AG04450 (cell line): ENCODE measurements at regions of chr14 and their contacts with region 1.

Region 1: GRCh38 chr14:55270832-55271565 is at the start of gene FBXO34:
- DNase-seq: peak; percentile 90
- H3K4me3 ChIP-seq: peak within 1 kb of the TSS; percentile 95
- H3K27ac ChIP-seq: peak within 1 kb of the TSS; percentile 71
- H3K27me3 ChIP-seq: no peaks in the 10 kb centered on the region
- CTCF ChIP-seq: peak; percentile 99
- polyA plus RNA-seq, gene FBXO34: 26.8 and 30.9 TPM in 2 replicates

Region 2: DNA sequence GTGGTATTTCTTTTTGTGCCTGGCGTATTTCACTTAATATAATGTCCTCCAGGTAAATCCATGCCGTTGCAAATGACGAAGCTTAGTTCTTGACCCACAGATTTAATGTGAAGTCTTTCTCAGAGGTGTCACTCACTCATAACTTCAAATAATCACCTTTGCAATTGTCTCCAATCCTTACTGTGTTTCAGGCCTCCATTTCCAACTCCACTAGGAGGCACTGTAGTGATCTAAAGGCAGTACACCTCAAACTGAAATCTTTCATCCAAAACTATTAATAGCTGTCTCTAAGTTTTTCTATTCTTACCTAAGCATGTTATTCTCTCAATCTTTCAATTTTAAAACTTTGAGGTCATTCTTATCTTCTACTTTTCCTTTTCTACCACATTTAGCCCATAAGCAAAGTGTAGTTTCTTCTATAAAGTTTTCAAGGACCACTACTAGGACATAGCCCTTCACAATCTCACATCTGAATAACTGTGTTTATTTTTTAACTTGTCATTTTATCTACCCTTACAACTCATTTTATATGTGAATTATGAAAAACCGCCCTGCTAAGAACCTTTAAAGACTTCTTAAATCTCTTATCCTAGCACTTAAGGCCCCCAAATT is 25.2 kb before region 1 on chr14:
- CTCF ChIA-PET with region 1: interaction called, 28 read pairs
- POLR2A ChIA-PET with region 1: no interaction called
- DNase-seq: no peak
- H3K4me3 ChIP-seq: no peak overlapping the region
- H3K27ac ChIP-seq: no peak overlapping the region
- H3K27me3 ChIP-seq: peaks cover 6% of the 10 kb centered on the region
- CTCF ChIP-seq: peak; percentile 78

Region 3: DNA sequence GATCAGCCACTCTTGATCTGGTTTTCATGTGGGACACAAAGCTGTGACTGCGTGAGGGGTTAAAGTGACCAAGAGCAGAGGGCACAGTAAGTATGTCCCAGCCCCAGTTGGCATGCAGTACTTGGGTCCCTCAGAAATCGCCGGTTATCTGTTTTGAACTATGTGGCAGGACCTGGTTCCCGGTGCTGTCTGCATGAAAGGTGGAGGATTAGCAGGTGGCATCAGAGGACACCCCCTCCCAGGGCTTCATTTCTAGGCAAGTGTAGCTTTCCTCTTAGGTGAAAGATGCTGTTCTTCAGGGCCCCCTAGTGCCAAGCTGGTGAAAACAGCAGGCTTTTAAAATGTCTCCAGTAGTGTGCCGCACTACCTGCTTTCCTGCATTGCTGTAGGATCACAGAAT is 83.5 kb after region 1 on chr14:
- CTCF ChIA-PET with region 1: interaction called, 34 read pairs
- POLR2A ChIA-PET with region 1: no interaction called
- DNase-seq: no peak
- H3K4me3 ChIP-seq: no peak overlapping the region
- H3K27ac ChIP-seq: no peak overlapping the region
- H3K27me3 ChIP-seq: no peaks in the 10 kb centered on the region
- CTCF ChIP-seq: peak; percentile 71

Region 4: GRCh38 chr14:55411426-55412389 is 140.7 kb after region 1 on chr14 and contains the start of gene ATG14:
- CTCF ChIA-PET with region 1: interaction called, 13 read pairs
- POLR2A ChIA-PET with region 1: no interaction called
- DNase-seq: peak; percentile 46
- H3K4me3 ChIP-seq: peak within 1 kb of the TSS; percentile 95
- H3K27ac ChIP-seq: peak within 1 kb of the TSS; percentile 41
- H3K27me3 ChIP-seq: no peaks in the 10 kb centered on the region
- CTCF ChIP-seq: no peak
- polyA plus RNA-seq, gene ATG14: 12.2 and 14.9 TPM in 2 replicates

Region 5: DNA sequence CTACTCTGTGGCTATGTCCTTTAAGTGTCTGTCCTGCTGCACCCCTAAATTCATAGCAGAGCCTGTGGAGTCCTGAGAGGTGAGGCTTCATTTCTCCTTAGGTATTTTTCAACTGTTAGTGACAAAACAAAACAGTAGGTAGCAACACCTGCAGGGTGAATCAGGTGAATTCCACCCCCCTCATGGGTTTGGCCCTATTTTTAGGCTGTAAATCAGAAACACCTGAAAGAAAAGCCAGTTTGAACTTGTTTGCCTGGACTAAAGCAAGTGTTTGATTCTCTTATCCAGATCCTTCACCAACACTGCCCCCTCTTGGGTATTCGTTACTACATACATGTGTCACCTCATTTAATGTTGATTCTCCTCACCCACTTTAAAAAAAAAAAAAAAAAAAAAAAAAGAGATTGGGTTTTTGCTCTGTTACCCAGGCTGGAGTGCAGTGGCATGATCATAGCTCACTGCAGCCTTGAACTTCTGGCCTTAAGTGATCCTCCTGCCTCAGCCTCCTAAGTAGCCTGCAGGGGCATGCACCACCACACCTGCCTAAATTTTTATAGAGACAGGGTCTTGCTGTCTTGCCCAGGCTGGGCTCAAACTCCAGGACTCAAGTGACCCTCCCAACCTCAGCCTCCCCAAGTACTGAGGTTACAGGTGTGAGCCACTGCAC is 159.2 kb after region 1 on chr14:
- CTCF ChIA-PET with region 1: interaction called, 27 read pairs
- POLR2A ChIA-PET with region 1: no interaction called
- DNase-seq: peak; percentile 67
- H3K4me3 ChIP-seq: no peak overlapping the region
- H3K27ac ChIP-seq: no peak overlapping the region
- H3K27me3 ChIP-seq: peaks cover 3% of the 10 kb centered on the region
- CTCF ChIP-seq: peak; percentile 64